ENCODE measurements at regions of chr1 and their contacts with region 1.

Region 1: DNA sequence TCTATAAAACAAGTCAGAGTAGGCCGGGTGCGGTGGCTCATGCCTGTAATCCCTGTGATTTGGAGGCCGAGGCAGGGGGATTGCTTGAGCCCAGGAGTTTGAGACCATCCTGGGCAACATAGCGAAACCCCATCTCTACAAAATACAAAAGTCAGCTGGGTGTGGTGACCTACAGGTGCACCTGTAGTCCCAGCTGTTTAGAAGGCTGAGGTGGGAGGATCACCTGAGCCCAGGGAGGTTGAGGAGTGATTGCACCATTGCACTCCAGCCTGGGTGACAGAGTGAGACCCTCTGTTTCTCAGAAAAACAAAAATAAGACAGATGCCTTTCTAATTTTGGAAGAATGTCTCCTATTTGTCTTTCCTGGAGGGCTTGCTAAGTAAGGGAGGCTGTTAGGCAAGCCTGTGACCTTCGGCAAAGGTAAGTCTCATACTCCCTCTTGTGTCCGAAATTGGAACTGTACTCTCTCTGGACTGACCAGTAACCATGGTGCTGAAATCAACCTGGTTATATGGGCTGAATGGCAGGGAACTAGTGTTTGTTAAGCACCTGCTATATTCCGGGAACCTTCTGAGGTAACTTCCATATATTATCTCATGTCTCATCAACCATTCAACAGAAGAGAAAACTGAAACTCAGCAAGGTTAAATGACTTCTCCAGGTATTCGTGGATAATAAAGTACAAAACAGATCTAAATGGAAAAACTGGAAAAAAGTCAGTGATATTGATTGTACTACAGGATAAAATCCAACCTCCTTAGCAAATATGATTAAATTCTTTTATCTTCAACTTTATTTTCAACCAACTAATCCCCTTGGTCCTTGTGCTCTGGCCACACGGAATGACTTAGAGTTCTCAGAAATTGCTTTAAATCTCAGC is 11.8 kb upstream of the RAB3B start:
- DNase-seq: no peak
- H3K4me3 ChIP-seq: no peak overlapping the region
- H3K27ac ChIP-seq: no peak overlapping the region
- H3K4me1 ChIP-seq: peaks cover 0 to 2% (median under 1%) of the 10 kb centered on the region in 4 donors
- H3K27me3 ChIP-seq: peaks cover 0 to 16% (median 0%) of the 10 kb centered on the region in 4 donors
- CTCF ChIP-seq: peak in 2 of 3 experiments; percentile 83 to 90
- EP300 ChIP-seq: no peak
- POLR2A ChIP-seq: no peak

Region 2: DNA sequence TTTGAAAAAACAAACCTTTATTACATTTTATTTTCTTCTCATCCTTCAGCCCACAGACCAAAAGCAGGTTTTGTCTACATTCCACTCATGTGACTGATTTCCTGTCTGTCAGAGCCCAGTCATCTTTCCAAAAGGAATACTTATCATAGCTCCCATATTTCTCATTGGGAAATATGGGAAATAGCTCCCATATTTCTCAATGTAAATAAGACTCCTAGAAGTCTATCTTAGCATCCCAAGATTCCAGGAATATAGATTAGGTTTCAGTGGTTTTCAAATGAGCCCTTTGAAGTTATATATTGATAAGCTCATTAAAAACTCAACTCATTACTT is 104.6 kb before region 1 on chr1:
- intact Hi-C with region 1: loop called (anchors 2 kb)
- DNase-seq: no peak
- H3K4me3 ChIP-seq: no peak overlapping the region
- H3K27ac ChIP-seq: no peak overlapping the region
- H3K4me1 ChIP-seq: no peaks in the 10 kb centered on the region
- H3K27me3 ChIP-seq: peaks cover 0 to 75% (median 4%) of the 10 kb centered on the region in 4 donors
- CTCF ChIP-seq: no peak
- EP300 ChIP-seq: no peak
- POLR2A ChIP-seq: no peak